Left lung (tissue), 14 donors: ENCODE measurements at regions of chr2 and their contacts with region 1.

Region 1: DNA sequence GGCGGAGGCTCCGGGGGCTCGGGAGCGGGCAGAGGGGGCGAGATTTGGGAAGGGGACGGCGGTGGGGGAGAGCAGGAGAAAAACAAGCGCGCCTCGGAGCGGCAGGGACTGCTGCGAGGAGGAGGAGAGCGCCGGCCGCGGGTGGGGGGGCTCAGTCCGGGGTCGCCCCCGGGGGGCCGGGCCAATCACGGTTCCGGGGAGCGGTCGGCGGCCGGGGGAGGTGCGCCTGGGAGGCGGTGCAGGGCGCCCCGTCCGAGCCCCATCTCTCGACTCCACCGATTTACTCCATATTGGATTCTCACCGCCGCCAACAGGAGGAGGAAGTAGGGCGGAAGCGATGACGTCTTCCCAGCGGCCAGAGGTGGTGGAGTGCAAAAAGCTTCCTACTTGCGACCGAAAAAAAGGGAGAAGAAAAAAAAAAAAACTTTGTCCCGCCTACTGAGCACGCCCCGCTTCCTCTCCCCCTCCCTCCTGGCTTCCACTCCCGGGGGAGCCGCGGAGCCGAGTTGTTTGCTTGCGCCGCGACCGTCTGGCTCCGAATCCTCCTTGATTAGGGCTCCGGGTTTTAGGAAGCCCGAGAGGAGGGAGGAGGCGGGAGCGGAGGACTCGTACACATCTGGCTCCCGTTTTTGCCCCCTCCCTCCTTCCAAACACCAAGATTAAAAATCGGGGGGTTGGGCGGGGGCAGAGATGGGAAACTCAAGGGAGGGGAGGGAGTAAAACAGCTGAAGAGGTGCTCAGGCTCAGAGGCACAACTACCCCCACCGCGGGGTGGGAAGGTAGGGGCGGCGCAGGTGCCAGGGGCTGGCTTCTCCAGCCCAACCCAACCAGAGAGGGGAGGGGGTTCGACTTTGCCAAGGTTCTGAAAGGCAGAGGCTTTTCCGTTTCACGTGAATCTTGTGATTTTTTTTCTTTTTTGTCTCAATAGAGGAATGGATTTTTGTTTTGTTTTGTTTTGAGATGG is at the start of gene SPRED2:
- DNase-seq: peak; percentile 92 to 96 (median 93)
- ATAC-seq: peak; percentile 70
- H3K4me3 ChIP-seq: peak within 1 kb of the TSS; percentile 72 to 95
- H3K27ac ChIP-seq: peak within 1 kb of the TSS; percentile 85 to 86
- H3K4me1 ChIP-seq: peaks cover 19 to 45% of the 10 kb centered on the region in 2 donors
- H3K27me3 ChIP-seq: no peaks in the 10 kb centered on the region
- CTCF ChIP-seq: no peak
- polyA plus RNA-seq, gene SPRED2: 31.5 to 41.5 (median 40.4) TPM

Region 2: GRCh38 chr2:65278531-65278981 is 154.0 kb before region 1 on chr2:
- intact Hi-C with region 1: loop called in 1 of 2 experiments (anchors 10 kb)
- DNase-seq: peak in 1 of 4 donors; percentile 44
- ATAC-seq: peak; percentile 24
- H3K4me3 ChIP-seq: no peak overlapping the region
- H3K27ac ChIP-seq: peak overlapping the region; percentile 48 to 71
- H3K4me1 ChIP-seq: peaks cover 24 to 34% of the 10 kb centered on the region in 2 donors
- H3K27me3 ChIP-seq: no peaks in the 10 kb centered on the region
- CTCF ChIP-seq: no peak